Activated T-helper 1 cell treated with anti-CD3 and anti-CD28 coated beads, Interleukin-12 subunit alpha, Interleukin-12 subunit beta, Interleukin-2, Interleukin-4 antibody, amounts not matched to agents 30 ng/mL and 10 ng/mL and 1 ng/mL, durations not matched to agents 14 hours and 24 hours and 36 hours (primary cell): ENCODE measurements at regions of chr3 and their contacts with region 1.

Region 1: DNA sequence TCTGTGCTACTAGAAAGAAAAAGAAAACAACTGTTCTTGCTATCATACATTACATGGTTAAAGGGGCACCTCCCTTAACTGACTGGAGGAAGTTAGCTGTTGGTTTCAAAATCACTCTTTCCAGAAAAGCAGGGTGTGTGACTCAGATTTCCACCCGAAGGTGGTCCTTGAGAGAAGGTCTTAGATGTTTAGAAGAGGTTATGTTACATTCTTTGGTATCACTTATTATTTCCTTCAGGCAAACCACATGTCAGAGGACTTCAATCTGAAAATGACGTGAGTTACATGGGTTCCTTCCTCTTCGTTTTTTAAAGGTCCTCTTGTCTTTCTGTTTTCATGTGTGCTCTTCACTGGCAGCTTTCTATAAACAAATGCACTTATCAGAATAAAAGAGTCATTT is 307.9 kb upstream of the CBLB start:
- DNase-seq: peak; percentile 68
- H3K4me3 Mint-ChIP-seq: peak overlapping the region; percentile 75
- H3K27ac Mint-ChIP-seq: peak overlapping the region; percentile 92
- H3K4me1 Mint-ChIP-seq: peaks cover 70% of the 10 kb centered on the region
- H3K27me3 Mint-ChIP-seq: no peaks in the 10 kb centered on the region

Region 2: DNA sequence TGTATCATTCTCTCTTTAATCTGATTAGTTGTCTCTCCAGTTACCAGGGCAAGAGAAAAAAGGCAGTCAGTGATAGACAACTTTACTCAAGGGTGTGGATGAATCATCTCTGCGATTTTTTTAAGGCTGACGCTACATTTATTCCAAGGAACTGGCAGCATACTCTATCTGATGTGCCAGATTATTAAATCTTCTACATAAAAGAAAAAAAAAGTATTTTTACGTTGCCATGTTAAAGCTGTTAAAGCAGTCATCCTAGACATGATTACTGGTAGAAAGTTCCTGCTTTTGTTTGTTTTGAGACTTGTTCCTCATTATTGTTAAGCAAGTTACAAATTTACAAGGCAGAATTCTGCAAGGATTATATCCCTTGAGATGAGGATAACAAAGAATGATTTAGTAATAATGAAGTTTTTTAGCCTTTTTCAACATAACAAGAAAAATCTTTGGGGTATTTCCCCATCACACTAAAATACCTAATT is 429.6 kb before region 1 on chr3:
- intact Hi-C with region 1: loop called (anchors 2 kb)
- DNase-seq: no peak
- H3K4me3 Mint-ChIP-seq: peak overlapping the region; percentile 64
- H3K27ac Mint-ChIP-seq: peak overlapping the region; percentile 81
- H3K4me1 Mint-ChIP-seq: peaks cover 79% of the 10 kb centered on the region
- H3K27me3 Mint-ChIP-seq: no peaks in the 10 kb centered on the region

Region 3: DNA sequence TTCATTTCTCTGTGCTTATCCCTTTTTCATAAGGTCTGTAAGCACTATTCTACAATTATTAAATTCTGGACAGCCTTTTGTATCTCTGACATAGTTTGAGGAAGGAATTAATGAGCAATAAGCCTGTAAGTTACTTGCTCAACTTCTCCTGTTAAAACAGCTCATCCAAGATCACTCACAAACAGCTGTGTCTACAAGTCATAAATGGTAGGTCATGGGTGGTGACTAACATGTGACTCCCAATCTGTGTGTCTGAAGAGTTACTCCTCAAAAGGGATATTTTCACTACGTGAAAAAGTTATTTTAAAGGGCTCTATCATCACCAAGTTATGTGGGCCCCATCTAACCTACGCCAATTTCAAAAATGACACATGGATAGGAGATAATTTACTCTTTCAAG is 162.8 kb before region 1 on chr3:
- intact Hi-C with region 1: loop called (anchors 1 kb)
- DNase-seq: no peak
- H3K4me3 Mint-ChIP-seq: no peak overlapping the region
- H3K27ac Mint-ChIP-seq: peak overlapping the region; percentile 5
- H3K4me1 Mint-ChIP-seq: peaks cover 65% of the 10 kb centered on the region
- H3K27me3 Mint-ChIP-seq: no peaks in the 10 kb centered on the region

Region 4: DNA sequence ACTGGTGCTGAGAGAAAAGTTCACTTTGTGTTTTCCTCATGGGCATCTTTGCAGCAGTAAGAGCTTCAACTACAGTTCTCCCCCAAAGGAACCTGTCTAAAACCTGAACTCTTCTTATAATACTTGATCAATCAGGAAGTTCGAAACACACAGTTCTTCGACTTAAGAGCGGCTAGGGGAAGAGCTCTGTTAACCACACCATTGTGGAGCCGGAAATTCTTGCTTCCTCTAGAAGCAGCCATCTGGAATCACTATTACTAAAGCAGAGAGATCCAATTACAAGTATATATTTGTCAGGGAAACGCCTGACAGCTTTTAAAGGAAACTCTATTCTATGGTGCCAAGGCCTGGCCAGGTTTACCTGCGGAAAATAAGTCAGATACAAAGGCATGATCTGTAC is 29.4 kb after region 1 on chr3:
- intact Hi-C with region 1: loop called (anchors 1 kb)
- DNase-seq: no peak
- H3K4me3 Mint-ChIP-seq: peak overlapping the region; percentile 54
- H3K27ac Mint-ChIP-seq: peak overlapping the region; percentile 92
- H3K4me1 Mint-ChIP-seq: peaks cover 58% of the 10 kb centered on the region
- H3K27me3 Mint-ChIP-seq: no peaks in the 10 kb centered on the region

Region 5: DNA sequence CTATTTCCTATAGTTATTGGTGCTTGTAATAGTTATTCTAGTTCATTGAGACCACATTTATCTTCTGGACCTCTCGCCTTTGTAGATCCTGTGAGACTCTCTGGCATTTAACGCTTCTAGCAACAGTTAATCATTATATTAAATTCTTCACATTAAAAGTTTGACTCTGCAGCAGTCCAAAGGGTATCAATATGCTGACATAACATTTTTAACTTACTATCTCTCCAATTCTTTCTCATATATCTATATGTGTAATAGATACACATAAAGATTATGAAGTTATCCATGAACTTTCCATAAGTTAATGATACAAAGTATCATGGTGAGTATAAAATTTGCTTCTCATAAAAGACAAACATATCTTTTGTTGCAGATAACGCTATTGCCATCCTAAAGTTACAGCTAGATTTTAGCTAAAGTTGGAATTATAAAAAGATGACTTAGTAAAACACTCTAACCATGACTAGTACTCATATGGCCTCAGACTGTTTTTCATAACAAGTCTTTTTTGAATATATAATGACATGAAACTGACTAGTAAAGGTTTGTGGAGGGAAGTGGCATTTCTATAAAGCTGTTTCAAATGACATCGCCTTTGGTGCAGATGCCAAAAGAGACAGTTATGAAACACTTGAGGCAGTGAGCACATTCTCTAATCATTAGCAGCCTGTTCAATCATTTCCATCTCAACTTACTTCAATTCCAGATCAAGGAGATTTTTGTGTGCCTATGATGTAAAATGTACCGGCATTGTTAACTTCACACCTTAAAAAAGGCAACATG is 71.4 kb after region 1 on chr3:
- intact Hi-C with region 1: loop called (anchors 1 kb)
- DNase-seq: no peak
- H3K4me3 Mint-ChIP-seq: peak overlapping the region; percentile 16
- H3K27ac Mint-ChIP-seq: peak overlapping the region; percentile 67
- H3K4me1 Mint-ChIP-seq: peaks cover 32% of the 10 kb centered on the region
- H3K27me3 Mint-ChIP-seq: no peaks in the 10 kb centered on the region

Region 6: GRCh38 chr3:106428565-106428994 is 251.8 kb after region 1 on chr3:
- intact Hi-C with region 1: loop called (anchors 1 kb)
- DNase-seq: no peak
- H3K4me3 Mint-ChIP-seq: no peak overlapping the region
- H3K27ac Mint-ChIP-seq: peak overlapping the region; percentile 93
- H3K4me1 Mint-ChIP-seq: peaks cover 57% of the 10 kb centered on the region
- H3K27me3 Mint-ChIP-seq: no peaks in the 10 kb centered on the region

Region 7: DNA sequence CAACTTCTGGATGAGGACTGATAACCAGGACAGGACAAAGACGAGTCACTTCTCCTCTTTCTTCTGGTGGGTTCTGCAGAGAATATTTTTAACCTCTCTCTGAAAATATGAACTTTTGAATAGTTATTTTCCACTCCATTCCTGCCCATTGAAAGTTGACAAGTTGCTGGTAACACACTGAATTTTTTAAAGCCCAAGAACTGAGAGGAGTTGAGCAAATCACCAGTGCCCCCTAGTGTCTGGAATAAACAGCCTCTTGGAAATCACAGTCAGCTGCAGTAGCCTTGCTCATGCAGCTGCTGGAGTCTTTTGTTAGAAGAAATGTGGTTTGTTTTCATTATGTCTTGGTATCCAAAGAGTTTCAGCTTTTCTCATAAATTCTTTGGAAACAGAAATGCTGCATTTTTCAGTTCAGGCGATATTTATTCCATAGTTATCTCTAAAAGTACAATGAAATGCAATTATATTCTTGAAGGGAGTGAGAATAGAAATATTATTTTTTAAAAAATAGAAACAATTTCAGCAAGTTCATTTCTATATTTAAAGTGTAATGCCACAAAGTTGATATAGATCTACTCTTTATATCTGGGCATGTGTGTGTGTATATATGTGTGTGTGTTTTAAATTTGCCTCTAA is 433.1 kb after region 1 on chr3:
- intact Hi-C with region 1: loop called (anchors 2 kb)
- DNase-seq: peak; percentile 50
- H3K4me3 Mint-ChIP-seq: no peak overlapping the region
- H3K27ac Mint-ChIP-seq: peak overlapping the region; percentile 66
- H3K4me1 Mint-ChIP-seq: peaks cover 30% of the 10 kb centered on the region
- H3K27me3 Mint-ChIP-seq: no peaks in the 10 kb centered on the region